B cell (primary cell): ENCODE measurements at regions of chr1 and their contacts with region 1.

Region 1: GRCh38 chr1:23098463-23099170 is 70.0 kb downstream of the LUZP1 start:
- DNase-seq: peak; percentile 79
- ATAC-seq: peak; percentile 87
- H3K4me3 ChIP-seq: no peak overlapping the region
- H3K4me3 Mint-ChIP-seq: peak overlapping the region; percentile 2
- H3K27ac ChIP-seq: no peak overlapping the region
- H3K27ac Mint-ChIP-seq: no peak overlapping the region
- H3K4me1 ChIP-seq: peaks cover 7 to 12% of the 10 kb centered on the region in 2 donors
- H3K4me1 Mint-ChIP-seq: peaks cover 15% of the 10 kb centered on the region
- H3K27me3 ChIP-seq: no peaks in the 10 kb centered on the region
- H3K27me3 Mint-ChIP-seq: no peaks in the 10 kb centered on the region
- CTCF ChIP-seq: peak; percentile 93

Region 2: DNA sequence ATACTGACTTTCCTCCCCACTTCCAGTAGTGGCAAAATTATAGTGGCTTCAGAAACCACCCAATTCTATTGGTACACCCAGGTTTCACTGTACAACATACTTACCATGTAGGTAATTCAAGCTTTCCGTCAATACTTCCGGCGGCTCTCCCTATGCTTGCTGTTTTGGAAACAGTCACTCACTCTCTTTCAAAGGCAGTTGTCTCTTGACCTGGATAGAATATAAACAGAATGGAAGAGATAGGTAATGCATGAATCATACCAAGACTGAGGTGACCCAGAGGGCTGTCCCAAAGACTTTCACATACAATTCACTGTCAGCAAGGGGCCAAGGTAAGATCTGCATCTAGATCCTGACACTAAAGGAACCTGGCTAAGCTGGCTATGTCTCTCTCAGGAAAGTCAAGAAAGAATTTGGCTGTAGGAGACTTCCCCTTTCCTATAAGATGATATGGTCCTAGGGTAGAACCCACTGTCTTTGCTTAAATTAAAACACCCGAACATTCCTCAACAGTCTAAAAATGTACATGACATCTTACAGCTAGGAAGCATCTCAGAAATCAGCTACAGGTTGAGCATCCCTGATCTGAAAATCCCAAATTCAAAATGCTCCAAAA is 10.4 kb after region 1 on chr1:
- CTCF ChIA-PET with region 1: interaction called, 45 read pairs
- POLR2A ChIA-PET with region 1: no interaction called
- intact Hi-C with region 1: loop called (anchors 2 kb)
- DNase-seq: no peak
- ATAC-seq: no peak
- H3K4me3 ChIP-seq: no peak overlapping the region
- H3K4me3 Mint-ChIP-seq: no peak overlapping the region
- H3K27ac ChIP-seq: no peak overlapping the region
- H3K27ac Mint-ChIP-seq: no peak overlapping the region
- H3K4me1 ChIP-seq: peaks cover under 1 to 3% of the 10 kb centered on the region in 2 donors
- H3K4me1 Mint-ChIP-seq: peaks cover 10% of the 10 kb centered on the region
- H3K27me3 ChIP-seq: no peaks in the 10 kb centered on the region
- H3K27me3 Mint-ChIP-seq: no peaks in the 10 kb centered on the region
- CTCF ChIP-seq: no peak

Region 3: GRCh38 chr1:23168457-23169194 is 70.0 kb after region 1 on chr1 and contains the start of gene LUZP1:
- CTCF ChIA-PET with region 1: interaction called, 884 read pairs
- POLR2A ChIA-PET with region 1: interaction called, 9 read pairs
- intact Hi-C with region 1: no loop called
- DNase-seq: peak; percentile 89
- ATAC-seq: peak; percentile 89
- H3K4me3 ChIP-seq: peak within 1 kb of the TSS; percentile 68 to 99 (median 80)
- H3K4me3 Mint-ChIP-seq: peak within 1 kb of the TSS; percentile 93
- H3K27ac ChIP-seq: peak within 1 kb of the TSS; percentile 32 to 69
- H3K27ac Mint-ChIP-seq: peak within 1 kb of the TSS; percentile 89
- H3K4me1 ChIP-seq: peaks cover 19 to 23% of the 10 kb centered on the region in 2 donors
- H3K4me1 Mint-ChIP-seq: peaks cover 25% of the 10 kb centered on the region
- H3K27me3 ChIP-seq: no peaks in the 10 kb centered on the region
- H3K27me3 Mint-ChIP-seq: no peaks in the 10 kb centered on the region
- CTCF ChIP-seq: no peak
- total RNA-seq, gene LUZP1: 12.8 and 12.9 TPM in 2 replicates

Region 4: DNA sequence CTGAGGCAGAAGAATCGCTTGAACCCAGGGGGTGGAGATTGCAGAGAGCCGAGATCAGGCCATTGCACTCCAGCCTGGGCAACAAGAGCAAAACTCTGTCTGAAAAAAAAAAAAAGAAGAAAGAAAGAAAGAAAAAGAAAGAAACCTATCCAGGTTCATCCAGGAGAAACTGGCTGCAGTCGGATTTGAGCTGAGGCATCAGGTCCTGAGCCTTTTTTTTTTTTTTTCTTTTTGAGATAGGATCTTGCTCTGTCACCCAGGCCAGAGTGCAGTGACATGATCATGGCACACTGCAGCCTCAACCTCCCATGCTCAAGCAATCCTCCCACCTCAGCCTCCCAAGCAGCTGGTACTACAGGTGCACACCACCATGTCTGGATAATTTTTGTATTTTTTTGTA is 92.6 kb after region 1 on chr1:
- CTCF ChIA-PET with region 1: interaction called, 884 read pairs
- POLR2A ChIA-PET with region 1: no interaction called
- intact Hi-C with region 1: no loop called
- DNase-seq: no peak
- ATAC-seq: no peak
- H3K4me3 ChIP-seq: no peak overlapping the region
- H3K4me3 Mint-ChIP-seq: no peak overlapping the region
- H3K27ac ChIP-seq: no peak overlapping the region
- H3K27ac Mint-ChIP-seq: no peak overlapping the region
- H3K4me1 ChIP-seq: no peaks in the 10 kb centered on the region
- H3K4me1 Mint-ChIP-seq: no peaks in the 10 kb centered on the region
- H3K27me3 ChIP-seq: no peaks in the 10 kb centered on the region
- H3K27me3 Mint-ChIP-seq: peaks cover 30% of the 10 kb centered on the region
- CTCF ChIP-seq: no peak